IMR-90 (cell line): ENCODE measurements at regions of chr2 and their contacts with region 1.

Region 1: DNA sequence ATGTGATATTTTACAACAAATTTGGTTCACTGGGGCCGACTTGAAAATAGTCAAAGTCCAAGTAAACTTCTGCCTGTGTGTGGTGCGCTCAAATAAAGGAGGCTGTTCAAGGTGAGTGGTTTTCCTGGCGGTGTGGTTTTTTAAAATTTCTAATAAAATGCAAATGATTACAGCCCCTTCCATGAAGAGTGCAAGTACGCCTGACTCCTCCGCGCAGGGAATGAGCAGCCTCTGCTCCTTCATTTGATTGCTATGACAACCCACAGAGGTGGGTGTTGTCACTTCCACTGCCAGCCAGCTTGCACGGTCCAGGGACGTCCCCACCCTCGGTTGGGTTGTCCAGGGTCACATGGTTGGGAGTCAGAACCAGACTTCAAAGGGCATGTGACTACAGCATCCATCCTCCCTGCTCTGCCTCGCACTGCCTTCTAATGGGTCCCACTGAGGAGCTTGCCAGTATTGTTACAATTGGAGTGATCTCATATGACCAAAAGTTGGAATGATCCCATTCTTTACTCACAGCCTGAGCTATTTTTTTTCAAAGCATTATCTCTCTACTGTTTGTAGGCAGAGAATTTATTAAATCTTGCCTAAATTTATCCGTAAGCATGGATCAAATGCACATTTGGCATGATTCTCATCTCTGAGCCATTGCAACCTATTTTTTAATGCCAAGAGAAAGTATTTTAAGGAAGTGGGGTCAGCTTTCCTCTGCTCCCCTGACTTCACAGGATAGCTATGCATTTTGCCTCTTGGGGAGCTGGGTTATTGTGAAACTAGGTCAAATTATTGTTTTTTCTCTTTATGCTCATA is 121.3 kb downstream of the AGAP1 start:
- DNase-seq: peak; percentile 85
- ATAC-seq: peak; percentile 61
- H3K4me3 ChIP-seq: no peak overlapping the region
- H3K27ac ChIP-seq: peak overlapping the region; percentile 31; the same call in 1 of the 2 replicates
- H3K4me1 ChIP-seq: peaks cover 9% of the 10 kb centered on the region
- H3K27me3 ChIP-seq: no peaks in the 10 kb centered on the region
- CTCF ChIP-seq: no peak
- POLR2A ChIP-seq: no peak
- RAD21 ChIP-seq: no peak

Region 2: DNA sequence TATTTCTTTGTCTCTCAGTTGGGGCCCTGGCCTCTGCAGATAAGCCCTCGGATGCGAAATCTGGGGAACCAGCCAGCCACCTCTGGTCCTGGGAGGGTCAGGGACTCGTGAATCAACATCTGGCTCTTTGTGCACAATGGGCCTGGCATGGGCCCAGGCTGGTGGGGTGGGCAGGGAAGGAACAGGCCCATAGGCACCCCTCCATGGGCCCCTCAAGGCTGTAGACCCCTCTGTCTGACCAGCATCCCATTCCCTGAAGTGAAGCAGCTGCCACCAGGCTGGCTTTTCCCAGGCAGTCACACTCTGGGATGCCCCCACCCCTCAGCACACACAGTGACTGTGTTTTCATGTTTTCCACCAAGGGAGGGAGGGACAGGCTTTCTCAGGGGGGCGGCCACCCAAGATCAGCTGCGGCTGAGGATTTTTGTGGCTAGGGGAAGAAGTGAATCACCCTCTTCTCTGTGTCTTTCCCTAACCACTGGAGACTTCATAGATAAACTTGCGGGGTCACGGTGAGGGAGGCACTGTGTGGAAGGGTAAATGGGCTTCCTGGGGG is 44.7 kb after region 1 on chr2:
- CTCF ChIA-PET with region 1: no interaction called
- POLR2A ChIA-PET with region 1: no interaction called
- dilution Hi-C with region 1: no loop called
- in situ Hi-C with region 1: no loop called
- intact Hi-C with region 1: loop called (anchors 1 kb)
- DNase-seq: peak; percentile 93
- ATAC-seq: peak; percentile 96
- H3K4me3 ChIP-seq: no peak overlapping the region
- H3K27ac ChIP-seq: peak overlapping the region; percentile 10; the same call in 1 of the 2 replicates
- H3K4me1 ChIP-seq: peaks cover 23% of the 10 kb centered on the region
- H3K27me3 ChIP-seq: no peaks in the 10 kb centered on the region; the same call in 1 of the 2 replicates
- CTCF ChIP-seq: no peak
- POLR2A ChIP-seq: no peak
- RAD21 ChIP-seq: peak; percentile 17

Region 3: DNA sequence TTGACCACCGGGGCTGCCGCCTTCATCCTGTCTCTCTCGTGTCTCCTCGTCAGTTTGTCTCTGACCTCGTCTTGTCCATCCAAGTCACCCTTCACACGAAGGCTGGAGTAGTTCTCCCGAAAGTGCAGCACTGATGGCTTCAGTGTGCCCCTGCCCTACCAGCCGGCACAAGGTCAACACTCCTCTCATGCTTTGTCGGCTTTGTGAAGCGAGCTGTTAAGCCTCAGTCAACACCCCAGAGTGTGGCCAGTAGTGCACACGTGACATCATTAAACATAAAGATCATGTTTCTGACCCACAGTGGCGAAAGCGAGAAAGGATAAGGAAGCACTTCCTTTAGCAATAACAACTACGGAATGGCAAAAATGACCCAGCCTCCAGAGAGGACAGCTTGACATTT is 977.7 kb after region 1 on chr2:
- CTCF ChIA-PET with region 1: no interaction called
- POLR2A ChIA-PET with region 1: no interaction called
- dilution Hi-C with region 1: no loop called
- in situ Hi-C with region 1: no loop called
- intact Hi-C with region 1: no loop called
- DNase-seq: no peak
- ATAC-seq: no peak; the same call in 1 of the 2 replicates
- H3K4me3 ChIP-seq: no peak overlapping the region
- H3K27ac ChIP-seq: no peak overlapping the region
- H3K4me1 ChIP-seq: no peaks in the 10 kb centered on the region; the same call in 1 of the 2 replicates
- H3K27me3 ChIP-seq: peaks cover 2% of the 10 kb centered on the region; the same call in 1 of the 2 replicates
- CTCF ChIP-seq: no peak
- POLR2A ChIP-seq: no peak
- RAD21 ChIP-seq: no peak